ENCODE measurements at regions of chr6 and their contacts with region 1.

Region 1: GRCh38 chr6:118263921-118264486 is 284.1 kb upstream of the PLN start:
- DNase-seq: peak in 4 of 10 donors; percentile 29 to 40 (median 34)

Region 2: DNA sequence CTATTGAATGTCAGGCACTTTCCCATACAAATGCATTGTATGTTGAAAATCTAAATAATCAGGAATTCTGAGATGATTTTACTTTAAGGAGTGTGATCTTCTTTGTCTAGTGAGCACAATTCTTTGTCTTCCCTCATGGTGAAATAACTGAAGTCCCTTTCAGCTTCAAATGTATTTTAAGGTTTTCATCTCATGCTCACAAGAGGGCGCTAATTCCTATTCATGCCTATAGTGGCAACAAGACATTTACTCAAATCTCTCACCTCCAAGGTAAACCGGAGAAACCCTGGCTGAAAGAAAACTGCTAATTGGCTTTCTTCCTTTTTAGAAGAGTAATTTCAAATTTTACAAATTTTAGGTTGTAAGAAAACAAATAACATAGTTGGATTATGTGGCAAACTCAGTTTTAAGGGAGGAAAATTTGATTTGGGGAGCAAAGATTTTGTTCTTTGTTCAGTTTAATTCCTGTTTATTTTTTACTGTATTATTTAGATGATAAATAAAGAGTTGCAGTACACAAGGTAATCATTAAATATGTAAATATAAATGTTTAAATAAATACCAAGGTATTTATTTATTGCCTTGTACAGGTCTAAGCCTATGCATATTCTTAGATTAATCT is 287.9 kb before region 1 on chr6:
- intact Hi-C with region 1: loop called (anchors 5 kb)
- DNase-seq: no peak

Measured in posterior cingulate gyrus (tissue), 11 donors.